ENCODE measurements at regions of chrX and their contacts with region 1.

Region 1: GRCh38 chrX:134023851-134024281 is 38.5 kb upstream of the GPC3 start:
- DNase-seq: no peak
- H3K4me3 ChIP-seq: no peak overlapping the region
- H3K27ac ChIP-seq: no peak overlapping the region
- H3K4me1 ChIP-seq: no peaks in the 10 kb centered on the region
- H3K27me3 ChIP-seq: no peaks in the 10 kb centered on the region
- CTCF ChIP-seq: no peak
- EP300 ChIP-seq: no peak
- POLR2A ChIP-seq: no peak

Region 2: DNA sequence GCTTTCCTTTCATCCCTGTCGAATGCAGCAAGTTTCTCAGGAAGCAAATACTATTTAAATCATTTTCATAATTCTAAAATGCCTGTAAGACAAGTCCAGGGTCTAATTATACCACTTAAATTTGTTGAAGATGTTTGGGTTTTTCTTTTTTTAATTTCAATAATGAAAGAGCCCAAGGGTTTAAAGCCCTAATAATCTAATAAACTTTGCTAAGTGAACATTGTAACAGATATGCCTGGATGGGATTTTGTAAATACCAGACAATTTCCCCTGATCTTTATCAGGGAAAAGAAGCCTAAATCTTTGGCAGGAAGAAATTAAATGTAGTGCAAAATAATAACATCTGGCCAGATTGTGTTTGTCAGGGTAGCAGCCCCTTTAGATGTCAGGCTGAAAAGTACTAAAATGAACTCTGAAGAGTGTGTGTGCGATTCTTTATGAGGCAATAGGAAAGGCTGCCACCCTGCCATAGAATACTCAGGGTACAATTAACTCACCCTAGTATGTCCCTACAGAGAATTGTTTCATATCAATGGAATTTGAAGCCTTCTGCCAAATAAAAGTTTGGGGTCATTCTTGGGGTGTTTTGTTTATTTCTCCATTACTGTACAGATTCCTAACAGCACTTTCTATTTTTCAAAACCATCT is 84.1 kb before region 1 on chrX:
- in situ Hi-C with region 1: no loop called
- intact Hi-C with region 1: loop called (anchors 1 kb)
- DNase-seq: no peak
- H3K4me3 ChIP-seq: no peak overlapping the region
- H3K27ac ChIP-seq: no peak overlapping the region
- H3K4me1 ChIP-seq: no peaks in the 10 kb centered on the region
- H3K27me3 ChIP-seq: no peaks in the 10 kb centered on the region
- CTCF ChIP-seq: no peak
- EP300 ChIP-seq: no peak
- POLR2A ChIP-seq: no peak